T-cell (primary cell): ENCODE measurements at regions of chr1 and their contacts with region 1.

Region 1: GRCh38 chr1:12658531-12659453 is 14.9 kb downstream of the AADACL4 start:
- DNase-seq: peak; percentile 9 to 85 (median 58)
- ATAC-seq: peak; percentile 69 to 85 (median 80)
- H3K4me3 ChIP-seq: no peak overlapping the region
- H3K4me3 Mint-ChIP-seq: no peak overlapping the region
- H3K27ac ChIP-seq: no peak overlapping the region
- H3K27ac Mint-ChIP-seq: peak overlapping the region in 1 of 2 donors; percentile 39
- H3K4me1 ChIP-seq: peaks cover 0 to 4% of the 10 kb centered on the region in 2 experiments
- H3K4me1 Mint-ChIP-seq: peaks cover 4 to 7% (median 6%) of the 10 kb centered on the region in 3 donors
- H3K27me3 ChIP-seq: peaks cover 0 to 7% of the 10 kb centered on the region in 2 experiments
- H3K27me3 Mint-ChIP-seq: peaks cover 0 to 7% of the 10 kb centered on the region in 2 donors

Region 2: GRCh38 chr1:12272770-12273169 is 386.0 kb before region 1 on chr1:
- CTCF ChIA-PET with region 1: interaction called, 5 to 12 read pairs
- POLR2A ChIA-PET with region 1: no interaction called
- DNase-seq: no peak
- ATAC-seq: no peak
- H3K4me3 ChIP-seq: no peak overlapping the region
- H3K4me3 Mint-ChIP-seq: no peak overlapping the region
- H3K27ac ChIP-seq: no peak overlapping the region
- H3K27ac Mint-ChIP-seq: no peak overlapping the region
- H3K4me1 ChIP-seq: no peaks in the 10 kb centered on the region
- H3K4me1 Mint-ChIP-seq: peaks cover 0 to 3% (median 0%) of the 10 kb centered on the region in 3 donors
- H3K27me3 ChIP-seq: no peaks in the 10 kb centered on the region
- H3K27me3 Mint-ChIP-seq: no peaks in the 10 kb centered on the region

Region 3: DNA sequence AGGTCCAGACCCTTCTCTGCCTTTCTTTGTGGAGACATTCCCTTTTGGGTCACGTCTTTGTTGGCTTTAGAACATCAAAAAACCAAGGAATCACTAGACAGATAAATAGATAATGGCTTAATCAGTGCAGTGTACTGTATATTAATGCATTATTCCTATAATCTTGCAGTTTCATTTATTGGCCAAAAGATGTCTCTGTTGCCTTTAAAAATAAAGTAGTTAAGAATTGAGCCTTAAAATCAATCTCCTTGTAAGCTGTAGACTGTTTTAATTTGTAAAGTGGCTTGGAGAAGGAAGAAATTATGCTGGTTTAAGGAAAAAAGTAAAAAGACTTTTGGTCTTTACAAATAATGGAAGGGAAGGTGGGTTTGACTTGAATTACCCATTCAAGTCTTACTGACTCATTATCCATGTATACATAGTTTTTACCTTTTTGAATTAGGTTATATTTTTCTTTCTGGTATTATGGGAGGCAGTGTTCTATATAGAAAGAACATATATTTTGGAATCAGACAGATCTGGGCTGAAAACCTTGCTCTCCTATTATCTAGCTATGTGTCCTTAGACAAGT is 344.4 kb before region 1 on chr1:
- CTCF ChIA-PET with region 1: interaction called, 13 to 23 read pairs
- POLR2A ChIA-PET with region 1: no interaction called
- DNase-seq: peak in 1 of 35 experiments; percentile 44
- ATAC-seq: peak in 2 of 4 experiments; percentile 37 to 57
- H3K4me3 ChIP-seq: no peak overlapping the region
- H3K4me3 Mint-ChIP-seq: no peak overlapping the region
- H3K27ac ChIP-seq: no peak overlapping the region
- H3K27ac Mint-ChIP-seq: no peak overlapping the region
- H3K4me1 ChIP-seq: no peaks in the 10 kb centered on the region
- H3K4me1 Mint-ChIP-seq: no peaks in the 10 kb centered on the region
- H3K27me3 ChIP-seq: no peaks in the 10 kb centered on the region
- H3K27me3 Mint-ChIP-seq: no peaks in the 10 kb centered on the region

Region 4: GRCh38 chr1:12556368-12556930 is 102.3 kb before region 1 on chr1:
- CTCF ChIA-PET with region 1: no interaction called
- POLR2A ChIA-PET with region 1: no interaction called
- DNase-seq: no peak
- ATAC-seq: no peak
- H3K4me3 ChIP-seq: no peak overlapping the region
- H3K4me3 Mint-ChIP-seq: no peak overlapping the region
- H3K27ac ChIP-seq: no peak overlapping the region
- H3K27ac Mint-ChIP-seq: peak overlapping the region in 1 of 2 donors; percentile 66
- H3K4me1 ChIP-seq: no peaks in the 10 kb centered on the region
- H3K4me1 Mint-ChIP-seq: peaks cover 0 to 10% (median 9%) of the 10 kb centered on the region in 3 donors
- H3K27me3 ChIP-seq: peaks cover 0 to 9% of the 10 kb centered on the region in 2 experiments
- H3K27me3 Mint-ChIP-seq: no peaks in the 10 kb centered on the region